ENCODE measurements at regions of chr5 and their contacts with region 1.

Region 1: GRCh38 chr5:50738864-50739263 is 72.4 kb downstream of the PARP8 start:
- DNase-seq: no peak
- ATAC-seq: no peak
- H3K4me3 ChIP-seq: no peak overlapping the region
- H3K4me3 Mint-ChIP-seq: no peak overlapping the region
- H3K27ac ChIP-seq: no peak overlapping the region
- H3K27ac Mint-ChIP-seq: no peak overlapping the region
- H3K4me1 ChIP-seq: peaks cover 5 to 7% of the 10 kb centered on the region in 2 donors
- H3K4me1 Mint-ChIP-seq: peaks cover 28% of the 10 kb centered on the region
- H3K27me3 ChIP-seq: no peaks in the 10 kb centered on the region
- H3K27me3 Mint-ChIP-seq: no peaks in the 10 kb centered on the region
- CTCF ChIP-seq: no peak

Region 2: DNA sequence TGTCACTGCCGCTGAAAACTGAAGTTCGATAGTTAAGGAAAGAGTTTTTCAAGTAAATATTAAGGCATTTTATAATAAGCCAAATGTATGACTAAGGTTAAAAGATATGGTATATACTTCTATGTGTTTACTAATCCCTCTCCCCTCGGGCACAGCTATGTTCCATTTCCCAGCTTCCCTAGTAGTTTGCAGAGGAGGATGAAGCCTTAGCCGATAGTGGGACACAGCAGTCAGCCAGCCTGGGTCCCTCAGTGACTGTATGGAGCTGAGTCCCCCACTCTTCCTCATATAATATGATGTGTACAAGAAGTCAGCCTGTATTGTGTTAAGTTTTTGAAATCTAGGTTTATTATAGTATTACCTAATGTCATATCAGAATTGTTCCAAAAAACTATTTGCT is 16.6 kb before region 1 on chr5:
- CTCF ChIA-PET with region 1: interaction called, 6 read pairs
- POLR2A ChIA-PET with region 1: no interaction called
- intact Hi-C with region 1: loop called (anchors 2 kb)
- DNase-seq: no peak
- ATAC-seq: no peak
- H3K4me3 ChIP-seq: no peak overlapping the region
- H3K4me3 Mint-ChIP-seq: no peak overlapping the region
- H3K27ac ChIP-seq: no peak overlapping the region
- H3K27ac Mint-ChIP-seq: no peak overlapping the region
- H3K4me1 ChIP-seq: peaks cover 10 to 23% of the 10 kb centered on the region in 2 donors
- H3K4me1 Mint-ChIP-seq: peaks cover 56% of the 10 kb centered on the region
- H3K27me3 ChIP-seq: no peaks in the 10 kb centered on the region
- H3K27me3 Mint-ChIP-seq: no peaks in the 10 kb centered on the region
- CTCF ChIP-seq: no peak

Region 3: GRCh38 chr5:50751064-50751657 is 12.3 kb after region 1 on chr5:
- CTCF ChIA-PET with region 1: interaction called, 15 read pairs
- POLR2A ChIA-PET with region 1: interaction called, 4 read pairs
- intact Hi-C with region 1: no loop called
- DNase-seq: peak; percentile 79
- ATAC-seq: peak; percentile 80
- H3K4me3 ChIP-seq: no peak overlapping the region
- H3K4me3 Mint-ChIP-seq: no peak overlapping the region
- H3K27ac ChIP-seq: peak overlapping the region in 1 of 2 donors; percentile 39
- H3K27ac Mint-ChIP-seq: no peak overlapping the region
- H3K4me1 ChIP-seq: peaks cover 0 to 2% of the 10 kb centered on the region in 2 donors
- H3K4me1 Mint-ChIP-seq: peaks cover 29% of the 10 kb centered on the region
- H3K27me3 ChIP-seq: no peaks in the 10 kb centered on the region
- H3K27me3 Mint-ChIP-seq: no peaks in the 10 kb centered on the region
- CTCF ChIP-seq: peak; percentile 92

Measured in B cell (primary cell).